Dendritic cell treated with granulocyte-macrophage colony-stimulating factor and Interleukin-4, amounts not matched to agents 40 ng/mL and 50 ng/mL, for 4 days (primary cell): ENCODE measurements at regions of chr10 and their contacts with region 1.

Region 1: GRCh38 chr10:102352066-102352715 is 43.3 kb upstream of the NFKB2 start:
- H3K4me3 Mint-ChIP-seq: no peak overlapping the region
- H3K27ac Mint-ChIP-seq: no peak overlapping the region
- H3K4me1 Mint-ChIP-seq: no peaks in the 10 kb centered on the region
- H3K27me3 Mint-ChIP-seq: no peaks in the 10 kb centered on the region

Region 2: GRCh38 chr10:102167861-102168260 is 184.3 kb before region 1 on chr10:
- intact Hi-C with region 1: loop called (anchors 1 kb)
- H3K4me3 Mint-ChIP-seq: no peak overlapping the region
- H3K27ac Mint-ChIP-seq: no peak overlapping the region
- H3K4me1 Mint-ChIP-seq: peaks cover 5% of the 10 kb centered on the region
- H3K27me3 Mint-ChIP-seq: peaks cover 3% of the 10 kb centered on the region

Region 3: GRCh38 chr10:102394079-102394800 is 42.0 kb after region 1 on chr10:
- intact Hi-C with region 1: no loop called
- H3K4me3 Mint-ChIP-seq: peak overlapping the region; percentile 100
- H3K27ac Mint-ChIP-seq: peak overlapping the region; percentile 100
- H3K4me1 Mint-ChIP-seq: peaks cover 50% of the 10 kb centered on the region
- H3K27me3 Mint-ChIP-seq: peaks cover 20% of the 10 kb centered on the region